Activated T-helper 1 cell treated with anti-CD3 and anti-CD28 coated beads, Interleukin-12 subunit alpha, Interleukin-12 subunit beta, Interleukin-2, Interleukin-4 antibody, amounts not matched to agents 30 ng/mL and 10 ng/mL and 1 ng/mL, durations not matched to agents 14 hours and 24 hours and 36 hours (primary cell): ENCODE measurements at regions of chr4 and their contacts with region 1.

Region 1: DNA sequence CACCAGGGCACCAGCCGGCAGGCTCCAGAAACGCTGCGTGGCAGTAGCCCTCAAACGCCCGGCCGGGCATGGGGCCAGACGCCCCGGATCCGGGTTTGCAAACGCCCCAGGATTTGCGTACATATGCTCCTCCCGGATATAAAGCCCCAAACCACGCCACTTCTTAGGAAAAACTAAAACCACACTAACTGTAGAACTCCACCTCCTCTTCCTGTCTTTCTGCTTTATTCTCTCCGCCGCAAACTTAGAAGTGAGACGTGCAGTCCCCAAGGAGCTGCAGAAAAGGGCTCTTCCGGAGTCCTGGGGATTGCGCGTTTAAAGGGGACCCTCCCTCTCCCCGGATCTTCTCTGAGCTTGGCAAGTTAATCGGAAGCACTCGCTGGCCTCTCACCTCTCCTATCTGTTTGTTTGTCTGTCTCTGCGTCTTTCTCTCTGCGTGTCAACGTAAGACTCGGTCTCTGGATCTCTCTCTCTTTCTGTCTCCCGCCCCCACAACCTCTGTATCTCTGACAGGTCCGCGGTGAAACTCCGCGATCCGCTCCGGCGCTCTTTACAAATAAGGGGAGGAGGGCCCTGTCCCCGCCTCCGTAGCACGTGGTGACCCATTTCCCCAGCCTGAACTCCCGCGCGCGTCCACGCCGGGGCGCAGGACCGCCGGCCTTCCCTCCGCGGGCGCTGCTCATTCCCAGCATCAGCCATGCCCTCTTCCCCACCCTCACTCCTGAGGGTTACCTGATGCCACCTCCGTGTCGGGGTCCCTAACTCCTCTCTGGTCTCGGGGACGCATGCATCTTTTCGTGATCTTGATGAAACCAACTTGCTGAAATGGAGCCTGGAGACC is at the start of gene SLC39A8:
- DNase-seq: peak; percentile 86
- H3K4me3 Mint-ChIP-seq: peak within 1 kb of the TSS; percentile 83
- H3K27ac Mint-ChIP-seq: peak within 1 kb of the TSS; percentile 98
- H3K4me1 Mint-ChIP-seq: peaks cover 48% of the 10 kb centered on the region
- H3K27me3 Mint-ChIP-seq: peaks cover 3% of the 10 kb centered on the region
- total RNA-seq, gene SLC39A8: 85.2 and 87.8 TPM in 2 replicates

Region 2: GRCh38 chr4:101347557-101348366 is 997.4 kb before region 1 on chr4:
- intact Hi-C with region 1: loop called (anchors 5 kb)
- DNase-seq: peak; percentile 95
- H3K4me3 Mint-ChIP-seq: peak overlapping the region; percentile 92
- H3K27ac Mint-ChIP-seq: peak overlapping the region; percentile 88
- H3K4me1 Mint-ChIP-seq: peaks cover 33% of the 10 kb centered on the region
- H3K27me3 Mint-ChIP-seq: peaks cover 53% of the 10 kb centered on the region

Region 3: DNA sequence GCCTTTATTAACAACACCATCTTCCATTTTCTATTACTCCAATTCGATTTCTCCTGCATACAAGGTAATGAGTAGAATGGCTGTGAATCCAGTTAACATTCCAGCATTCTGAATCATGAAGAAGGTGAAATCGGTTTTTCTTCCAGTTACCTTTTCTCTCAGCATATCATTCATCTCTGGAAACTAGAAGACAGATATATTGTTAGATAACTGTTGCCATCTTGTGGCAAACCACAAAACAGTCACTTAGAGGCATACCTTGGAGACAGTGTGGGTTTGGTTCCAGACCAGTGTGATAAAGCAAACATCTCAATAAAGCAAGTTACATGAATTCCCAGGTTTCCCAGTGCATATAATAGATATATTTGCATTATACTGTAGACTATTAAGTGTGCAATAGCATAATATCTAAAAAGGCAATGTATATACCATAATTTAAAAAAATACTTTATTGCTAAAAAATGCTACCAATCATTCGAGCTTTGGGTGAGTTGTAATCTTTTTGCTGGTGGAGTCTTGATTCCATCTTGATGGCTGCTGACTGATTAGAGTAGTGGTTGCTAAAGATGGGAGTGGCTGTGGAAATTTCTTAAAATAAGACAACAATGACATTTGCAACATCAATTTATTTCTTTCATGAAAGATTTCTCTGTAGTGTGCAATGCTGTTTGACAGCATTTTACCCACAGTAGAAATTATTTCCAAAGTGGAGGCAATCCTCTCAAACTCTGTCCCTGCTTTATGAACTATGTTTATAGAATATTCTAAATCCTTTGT is 82.0 kb before region 1 on chr4:
- intact Hi-C with region 1: loop called (anchors 1 kb)
- DNase-seq: no peak
- H3K4me3 Mint-ChIP-seq: no peak overlapping the region
- H3K27ac Mint-ChIP-seq: peak overlapping the region; percentile 19
- H3K4me1 Mint-ChIP-seq: peaks cover 16% of the 10 kb centered on the region
- H3K27me3 Mint-ChIP-seq: no peaks in the 10 kb centered on the region

Region 4: DNA sequence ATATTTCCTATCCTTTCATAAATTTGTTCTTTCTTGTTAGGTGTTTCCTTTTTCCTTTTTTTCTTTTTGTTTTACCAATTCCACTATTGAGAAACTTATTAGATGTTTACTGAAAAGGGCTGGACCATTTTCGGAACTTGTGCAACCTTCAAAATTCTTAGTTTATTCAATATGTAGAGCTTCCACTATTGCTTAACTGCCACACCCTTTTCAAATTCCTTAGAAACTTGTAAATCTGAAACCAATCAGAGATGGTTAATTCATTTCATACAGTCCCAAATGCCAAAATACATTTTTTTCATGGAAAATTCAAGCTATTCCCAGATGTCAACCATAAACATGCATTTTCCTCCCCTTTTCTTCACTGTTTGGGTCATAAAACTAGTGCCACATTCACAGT is 66.2 kb after region 1 on chr4:
- intact Hi-C with region 1: no loop called
- DNase-seq: no peak
- H3K4me3 Mint-ChIP-seq: no peak overlapping the region
- H3K27ac Mint-ChIP-seq: no peak overlapping the region
- H3K4me1 Mint-ChIP-seq: no peaks in the 10 kb centered on the region
- H3K27me3 Mint-ChIP-seq: peaks cover 3% of the 10 kb centered on the region

Region 5: GRCh38 chr4:102500696-102501446 is 155.7 kb after region 1 on chr4 and contains the start of gene NFKB1:
- intact Hi-C with region 1: loop called (anchors 1 kb)
- DNase-seq: peak; percentile 83
- H3K4me3 Mint-ChIP-seq: peak within 1 kb of the TSS; percentile 94
- H3K27ac Mint-ChIP-seq: peak within 1 kb of the TSS; percentile 91
- H3K4me1 Mint-ChIP-seq: peaks cover 33% of the 10 kb centered on the region
- H3K27me3 Mint-ChIP-seq: peaks cover 5% of the 10 kb centered on the region
- total RNA-seq, gene NFKB1: 139 and 145 TPM in 2 replicates

Region 6: GRCh38 chr4:102511830-102512605 is 166.8 kb after region 1 on chr4:
- intact Hi-C with region 1: no loop called
- DNase-seq: no peak
- H3K4me3 Mint-ChIP-seq: no peak overlapping the region
- H3K27ac Mint-ChIP-seq: no peak overlapping the region
- H3K4me1 Mint-ChIP-seq: peaks cover 63% of the 10 kb centered on the region
- H3K27me3 Mint-ChIP-seq: no peaks in the 10 kb centered on the region

Region 7: GRCh38 chr4:102620697-102621497 is 275.7 kb after region 1 on chr4:
- intact Hi-C with region 1: loop called (anchors 1 kb)
- DNase-seq: no peak
- H3K4me3 Mint-ChIP-seq: no peak overlapping the region
- H3K27ac Mint-ChIP-seq: no peak overlapping the region
- H3K4me1 Mint-ChIP-seq: peaks cover 63% of the 10 kb centered on the region
- H3K27me3 Mint-ChIP-seq: no peaks in the 10 kb centered on the region

Region 8: DNA sequence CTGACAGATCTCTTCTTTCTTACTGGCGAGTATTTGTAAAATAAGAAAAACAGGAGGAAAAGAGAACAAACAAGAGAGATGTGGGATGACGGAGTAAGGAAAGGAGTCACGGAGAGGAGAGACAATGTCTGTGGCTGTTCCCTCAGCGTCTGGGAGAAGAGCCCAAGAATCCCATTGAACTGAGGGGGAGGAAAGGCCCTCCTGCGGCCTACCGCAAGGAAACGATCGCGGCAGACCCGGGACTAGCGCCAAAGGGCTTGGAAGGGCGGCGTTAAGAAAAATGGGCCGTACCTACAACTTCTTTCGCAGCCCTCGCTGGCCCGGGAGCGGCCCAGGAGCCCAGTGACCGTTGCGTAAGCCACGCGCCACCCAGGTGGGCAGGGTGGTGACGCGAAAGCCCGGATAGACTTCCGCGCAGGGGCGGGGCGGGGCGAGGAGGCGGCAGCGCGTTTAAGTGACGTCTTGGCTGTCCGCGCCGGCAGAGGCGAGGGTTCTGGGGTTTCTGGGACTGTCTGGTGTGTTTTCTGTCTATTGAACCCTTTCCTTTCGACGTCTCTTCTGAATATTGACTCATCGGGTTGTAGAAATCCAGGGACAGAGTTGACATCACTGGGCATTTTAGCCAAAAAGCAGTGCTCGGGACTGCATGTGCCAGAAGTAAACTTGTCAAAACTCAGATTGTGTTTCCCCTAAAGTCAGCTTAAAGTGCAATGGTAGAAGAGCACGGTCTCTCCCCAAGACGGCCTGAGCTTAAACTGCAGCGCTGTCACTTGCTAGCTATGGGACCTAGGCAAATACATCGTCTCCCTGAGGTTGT is 674.3 kb after region 1 on chr4 and contains the start of gene SLC9B1:
- intact Hi-C with region 1: loop called (anchors 1 kb)
- DNase-seq: peak; percentile 93
- H3K4me3 Mint-ChIP-seq: peak within 1 kb of the TSS; percentile 90
- H3K27ac Mint-ChIP-seq: peak within 1 kb of the TSS; percentile 96
- H3K4me1 Mint-ChIP-seq: peaks cover 25% of the 10 kb centered on the region
- H3K27me3 Mint-ChIP-seq: no peaks in the 10 kb centered on the region
- total RNA-seq, gene SLC9B1: 0.51 and 0.52 TPM in 2 replicates